Cardiac septum (tissue), 1 donor: ENCODE measurements at regions of chr13 and their contacts with region 1.

Region 1: GRCh38 chr13:43804461-43805070 is 17.8 kb upstream of the ENOX1 start:
- DNase-seq: no peak

Region 2: DNA sequence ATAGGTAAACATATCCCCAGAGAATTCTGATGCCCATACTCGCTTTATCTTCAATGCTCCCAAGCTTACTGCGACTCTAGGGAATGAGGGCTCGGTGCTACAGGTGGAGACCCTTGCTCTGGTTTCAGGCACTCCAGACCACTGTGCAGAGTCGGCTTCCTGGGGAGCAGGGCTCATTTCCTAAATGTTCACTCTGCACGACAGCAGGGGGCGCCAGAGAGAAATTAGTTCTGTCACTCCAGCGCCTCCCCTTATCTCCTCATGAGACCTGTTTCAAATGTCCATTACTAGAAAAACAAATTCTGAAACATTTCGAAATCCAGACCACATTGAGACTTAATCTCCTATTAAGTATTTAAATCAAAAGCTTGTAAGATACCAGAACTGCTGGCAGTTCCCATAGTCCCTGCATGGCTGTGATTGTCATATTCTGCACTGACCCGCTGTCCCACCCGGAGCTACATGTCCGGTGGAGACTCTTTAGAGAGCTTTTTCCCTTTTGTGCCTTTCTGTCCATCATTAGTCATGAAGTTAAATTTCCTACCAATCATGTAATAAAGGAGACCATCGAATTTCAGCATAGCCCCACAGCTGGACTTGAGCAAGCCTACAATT is 834.9 kb before region 1 on chr13:
- intact Hi-C with region 1: loop called (anchors 2 kb)
- DNase-seq: peak; percentile 85

Region 3: GRCh38 chr13:43085545-43085944 is 719.0 kb before region 1 on chr13:
- intact Hi-C with region 1: loop called (anchors 5 kb)
- DNase-seq: no peak

Region 4: GRCh38 chr13:43196086-43196621 is 608.4 kb before region 1 on chr13:
- intact Hi-C with region 1: loop called (anchors 10 kb)
- DNase-seq: no peak

Region 5: GRCh38 chr13:43303033-43303729 is 501.4 kb before region 1 on chr13:
- intact Hi-C with region 1: loop called (anchors 5 kb)
- DNase-seq: no peak

Region 6: DNA sequence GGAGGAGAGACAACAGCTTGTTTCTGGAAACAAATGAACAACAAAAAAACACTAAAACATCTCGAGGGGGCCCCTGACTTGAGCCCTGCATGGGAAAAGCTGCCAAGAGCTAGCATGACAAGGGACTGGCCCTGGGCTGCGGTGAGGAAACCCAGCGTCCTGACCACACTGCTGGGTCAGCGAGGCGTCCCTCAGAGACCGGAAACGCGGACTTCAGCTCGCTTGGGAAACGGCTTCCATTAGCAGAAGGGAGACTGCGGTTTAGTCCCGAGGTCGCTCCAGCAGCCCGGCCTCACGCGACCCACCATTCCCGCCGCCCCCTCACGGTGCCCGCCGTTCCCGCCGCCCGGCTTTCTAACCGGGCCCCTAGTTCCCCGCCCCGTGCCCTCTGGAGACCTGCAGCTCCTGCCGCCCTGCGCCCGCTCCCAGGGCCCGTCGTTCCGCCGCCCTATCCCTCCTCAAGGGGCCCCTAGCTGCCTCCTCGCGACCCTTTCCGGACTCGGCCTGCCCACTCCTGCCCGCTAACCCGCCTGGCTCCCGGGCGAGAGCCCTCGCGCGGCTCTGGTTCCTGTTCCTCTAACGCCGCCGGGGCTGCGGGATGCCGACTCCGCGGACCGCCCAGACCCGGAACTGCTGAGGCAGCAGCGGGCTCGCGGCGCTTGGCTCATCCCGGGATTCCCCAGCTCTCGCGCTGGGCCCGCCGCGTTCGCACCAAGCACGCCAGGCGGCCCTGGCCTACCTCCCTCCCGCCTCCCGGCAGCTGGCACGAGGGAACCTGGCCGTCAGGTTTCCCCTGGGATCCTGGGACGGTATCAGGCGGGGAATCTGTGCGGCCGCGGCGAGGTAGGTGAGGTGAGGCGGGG is 74.6 kb after region 1 on chr13 and contains the start of gene CCDC122:
- intact Hi-C with region 1: loop called (anchors 5 kb)
- DNase-seq: peak; percentile 93
- total RNA-seq, gene CCDC122: 8.9 TPM